GM13977 (cell line): ENCODE measurements at regions of chr4 and their contacts with region 1.

Region 1: DNA sequence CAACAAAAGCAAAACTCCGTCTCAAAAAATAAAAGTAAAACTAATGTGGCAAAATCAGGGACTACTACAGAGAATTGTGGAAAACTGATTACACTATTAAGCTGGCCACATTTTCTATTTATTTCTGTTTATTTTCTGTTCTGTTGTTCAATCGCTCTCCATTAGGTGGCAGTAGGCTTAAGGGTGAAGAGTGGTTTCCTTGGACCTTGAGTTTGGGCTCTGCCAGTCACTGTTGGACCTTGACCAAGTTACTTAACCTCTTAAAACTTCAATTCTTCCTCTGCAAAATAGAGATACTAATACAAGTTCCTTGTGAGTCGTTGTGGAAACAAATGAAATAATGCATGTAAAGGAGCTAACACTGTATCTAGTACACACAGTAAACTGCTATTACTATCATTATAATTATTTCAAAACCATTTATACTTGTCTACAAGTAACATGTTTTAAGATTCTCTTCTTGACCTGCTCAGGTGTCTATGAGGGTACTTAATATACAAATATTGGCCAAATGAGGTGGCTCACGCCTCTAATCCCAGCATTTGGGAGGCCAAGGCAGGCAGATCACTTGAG is 15.2 kb downstream of the HSD17B11 start:
- DNase-seq: no peak
- CTCF ChIP-seq: peak; percentile 69

Region 2: GRCh38 chr4:87141428-87141827 is 234.4 kb before region 1 on chr4:
- in situ Hi-C with region 1: no loop called
- DNase-seq: no peak
- CTCF ChIP-seq: no peak

Region 3: GRCh38 chr4:87465739-87466366 is 90.0 kb after region 1 on chr4:
- in situ Hi-C with region 1: loop called (anchors 10 kb)
- DNase-seq: peak; percentile 46
- CTCF ChIP-seq: peak; percentile 58

Region 4: GRCh38 chr4:87633243-87633642 is 257.4 kb after region 1 on chr4:
- in situ Hi-C with region 1: no loop called
- DNase-seq: no peak
- CTCF ChIP-seq: no peak